ENCODE measurements at regions of chr14 and their contacts with region 1.

Region 1: DNA sequence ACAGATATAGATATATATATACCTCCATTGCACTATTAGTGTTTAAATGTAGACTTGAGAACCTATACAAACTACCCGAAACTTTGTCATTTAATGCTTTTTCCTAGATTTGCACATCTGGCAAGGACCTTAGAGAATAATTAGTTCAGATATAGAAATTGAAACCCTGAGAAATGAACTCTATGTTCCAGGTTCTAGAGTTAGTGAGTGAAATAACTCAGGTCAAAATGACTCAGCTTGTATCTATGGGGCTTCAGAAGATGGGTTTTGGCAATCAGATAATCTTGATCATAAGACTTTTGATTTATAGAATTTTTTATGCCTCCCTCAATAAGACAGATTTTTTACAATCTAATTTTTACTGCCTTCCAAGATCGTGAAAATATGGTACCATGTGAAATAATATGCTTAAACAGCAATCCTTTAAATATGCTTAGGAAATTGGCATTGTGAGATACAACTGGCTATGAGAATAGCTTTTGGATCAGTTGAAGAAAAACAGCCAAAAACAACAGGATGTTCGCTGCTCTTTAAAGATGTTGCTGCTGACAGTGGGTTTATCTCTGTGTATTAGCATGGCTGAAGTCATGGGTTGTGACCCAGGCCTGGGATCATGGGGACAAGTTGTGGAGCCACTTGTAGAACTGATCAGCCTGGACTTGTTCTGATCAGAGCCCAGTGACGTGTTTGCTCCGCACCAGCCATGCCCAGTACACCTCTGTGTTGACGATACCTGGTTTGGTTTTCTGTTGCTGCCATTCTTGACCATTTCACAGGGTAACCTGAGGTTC is 63.6 kb downstream of the TTLL5 start:
- DNase-seq: no peak
- H3K4me3 Mint-ChIP-seq: no peak overlapping the region
- H3K27ac Mint-ChIP-seq: no peak overlapping the region
- H3K4me1 Mint-ChIP-seq: peaks cover 18% of the 10 kb centered on the region
- H3K27me3 Mint-ChIP-seq: no peaks in the 10 kb centered on the region

Region 2: GRCh38 chr14:75811872-75812499 is 87.4 kb after region 1 on chr14:
- intact Hi-C with region 1: no loop called
- DNase-seq: no peak
- H3K4me3 Mint-ChIP-seq: no peak overlapping the region
- H3K27ac Mint-ChIP-seq: no peak overlapping the region
- H3K4me1 Mint-ChIP-seq: no peaks in the 10 kb centered on the region
- H3K27me3 Mint-ChIP-seq: no peaks in the 10 kb centered on the region

Region 3: GRCh38 chr14:75879031-75879430 is 154.4 kb after region 1 on chr14:
- intact Hi-C with region 1: loop called (anchors 1 kb)
- DNase-seq: no peak
- H3K4me3 Mint-ChIP-seq: no peak overlapping the region
- H3K27ac Mint-ChIP-seq: no peak overlapping the region
- H3K4me1 Mint-ChIP-seq: peaks cover 20% of the 10 kb centered on the region
- H3K27me3 Mint-ChIP-seq: no peaks in the 10 kb centered on the region

Measured in activated T-helper 2 cell treated with anti-CD3 and anti-CD28 coated beads, Interferon-gamma antibody, Interleukin-2, Interleukin-4, amounts not matched to agents 10 μg/mL and 5 μg/mL and 100 μg/mL, durations not matched to agents 14 hours and 24 hours and 36 hours (primary cell).